PC-9 (cell line): ENCODE measurements at regions of chr17 and their contacts with region 1.

Region 1: GRCh38 chr17:2401426-2402221 is 764 bp upstream of the MNT start:
- DNase-seq: peak; percentile 97 to 100
- H3K4me3 ChIP-seq: peak overlapping the region; percentile 96
- H3K27ac ChIP-seq: peak overlapping the region; percentile 96
- H3K4me1 ChIP-seq: peaks cover 65% of the 10 kb centered on the region
- H3K27me3 ChIP-seq: no peaks in the 10 kb centered on the region
- CTCF ChIP-seq: no peak

Region 2: GRCh38 chr17:2054512-2055291 is 346.9 kb before region 1 on chr17 and contains the start of gene HIC1:
- CTCF ChIA-PET with region 1: interaction called, 3 read pairs
- POLR2A ChIA-PET with region 1: no interaction called
- intact Hi-C with region 1: loop called (anchors 5 kb)
- DNase-seq: peak; percentile 57 to 84
- H3K4me3 ChIP-seq: peak within 1 kb of the TSS; percentile 66
- H3K27ac ChIP-seq: no peak within 1 kb of the TSS
- H3K4me1 ChIP-seq: peaks cover 7% of the 10 kb centered on the region; the same call in 1 of the 2 replicates
- H3K27me3 ChIP-seq: peaks cover 12% of the 10 kb centered on the region
- CTCF ChIP-seq: peak; percentile 81
- total RNA-seq, gene HIC1: 0.63 and 1.6 TPM in 2 replicates

Region 3: GRCh38 chr17:2312736-2313135 is 88.9 kb before region 1 on chr17:
- CTCF ChIA-PET with region 1: no interaction called
- POLR2A ChIA-PET with region 1: no interaction called
- intact Hi-C with region 1: no loop called
- DNase-seq: no peak
- H3K4me3 ChIP-seq: no peak overlapping the region
- H3K27ac ChIP-seq: peak overlapping the region; percentile 18; the same call in 1 of the 2 replicates
- H3K4me1 ChIP-seq: no peaks in the 10 kb centered on the region; the same call in 1 of the 2 replicates
- H3K27me3 ChIP-seq: no peaks in the 10 kb centered on the region
- CTCF ChIP-seq: no peak

Region 4: GRCh38 chr17:2347547-2348307 is 53.9 kb before region 1 on chr17:
- CTCF ChIA-PET with region 1: interaction called, 20 read pairs
- POLR2A ChIA-PET with region 1: interaction called, 9 read pairs
- intact Hi-C with region 1: no loop called
- DNase-seq: peak; percentile 93 to 95
- H3K4me3 ChIP-seq: no peak overlapping the region; the same call in 1 of the 2 replicates
- H3K27ac ChIP-seq: peak overlapping the region; percentile 77
- H3K4me1 ChIP-seq: peaks cover 34% of the 10 kb centered on the region
- H3K27me3 ChIP-seq: no peaks in the 10 kb centered on the region
- CTCF ChIP-seq: no peak

Region 5: DNA sequence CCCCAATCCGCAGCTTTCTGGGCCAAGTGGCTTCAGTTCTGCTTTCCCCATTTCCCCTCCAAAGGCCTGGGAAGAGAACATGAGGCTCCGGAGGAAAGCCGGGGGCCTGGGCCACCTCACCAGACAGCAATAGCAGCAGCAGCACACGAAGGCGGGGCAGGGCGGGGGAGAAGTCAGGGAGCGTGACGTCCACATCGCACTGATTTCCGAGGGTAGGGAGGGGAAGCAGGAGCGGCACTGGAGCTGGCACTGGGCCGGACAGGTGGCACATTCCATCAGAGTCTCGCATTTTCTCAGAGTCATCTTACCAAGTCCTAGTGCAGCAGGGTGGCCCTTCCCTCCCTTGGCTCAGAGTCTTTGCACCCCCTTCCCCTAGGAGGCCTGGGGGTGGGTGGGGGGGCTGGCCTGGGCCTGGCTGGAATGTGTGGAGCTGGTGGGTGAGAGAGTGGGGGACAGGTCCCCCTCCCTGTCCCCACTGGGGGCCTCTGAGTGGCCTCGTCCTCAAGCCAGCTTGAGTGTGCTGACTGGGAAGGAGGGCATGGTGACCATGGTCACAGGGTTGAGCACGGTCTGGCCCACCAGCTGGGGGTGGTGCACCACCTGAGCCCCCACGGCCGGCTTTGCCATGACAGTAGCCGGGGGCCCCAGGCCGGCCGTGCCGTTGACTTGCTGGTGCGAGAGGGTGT is 15.1 kb before region 1 on chr17:
- CTCF ChIA-PET with region 1: interaction called, 13 read pairs
- POLR2A ChIA-PET with region 1: interaction called, 12 read pairs
- intact Hi-C with region 1: loop called (anchors 1 kb)
- DNase-seq: peak in 1 of 2 experiments; percentile 89
- H3K4me3 ChIP-seq: no peak overlapping the region
- H3K27ac ChIP-seq: no peak overlapping the region
- H3K4me1 ChIP-seq: peaks cover 2% of the 10 kb centered on the region
- H3K27me3 ChIP-seq: no peaks in the 10 kb centered on the region
- CTCF ChIP-seq: no peak

Region 6: DNA sequence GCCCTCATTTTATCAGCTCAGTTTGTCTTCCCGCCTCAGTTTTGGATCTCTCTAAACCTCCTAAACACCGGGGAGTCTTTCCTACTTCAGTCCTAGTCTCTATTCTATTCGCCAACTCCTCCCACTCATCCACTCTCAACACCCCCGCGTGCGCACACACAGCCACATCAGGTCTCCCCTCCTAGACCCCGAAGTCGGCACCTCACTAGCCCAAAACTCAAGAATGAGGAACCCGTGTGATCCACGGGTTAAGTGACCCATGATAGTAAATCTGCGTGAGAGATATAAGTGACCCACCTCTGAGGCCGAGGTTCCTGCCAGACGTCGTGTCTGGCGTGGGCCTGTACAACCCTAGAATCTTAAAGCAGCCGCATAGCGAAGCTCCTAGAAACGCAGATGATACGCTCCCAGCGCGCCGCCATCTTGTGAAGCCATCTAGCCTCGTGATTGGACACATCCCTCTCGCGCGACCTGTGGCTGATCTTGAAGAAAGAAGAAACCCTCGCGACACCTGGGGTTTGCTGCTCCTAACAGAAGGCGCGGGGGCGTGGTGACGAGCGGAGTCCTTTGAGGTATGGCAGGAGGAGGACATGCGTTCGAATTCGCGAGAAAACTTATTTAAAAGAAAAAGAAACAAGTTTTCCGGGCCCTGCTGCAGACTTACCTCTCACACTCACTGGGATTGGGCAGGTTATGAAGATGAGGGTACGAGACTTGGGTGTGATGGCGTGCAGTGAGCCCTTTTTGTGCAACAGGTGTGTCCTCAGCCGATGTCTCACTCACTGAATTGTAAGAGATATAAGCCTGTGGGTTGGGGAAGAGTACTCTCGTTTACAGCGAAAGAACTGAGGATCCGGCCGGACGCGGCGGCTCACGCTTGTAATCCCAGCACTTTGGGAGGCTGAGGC is 110.1 kb after region 1 on chr17 and contains the start of gene METTL16:
- CTCF ChIA-PET with region 1: no interaction called
- POLR2A ChIA-PET with region 1: interaction called, 15 read pairs
- intact Hi-C with region 1: no loop called
- DNase-seq: peak; percentile 97
- H3K4me3 ChIP-seq: peak within 1 kb of the TSS; percentile 82
- H3K27ac ChIP-seq: peak within 1 kb of the TSS; percentile 94
- H3K4me1 ChIP-seq: peaks cover 13% of the 10 kb centered on the region
- H3K27me3 ChIP-seq: no peaks in the 10 kb centered on the region
- CTCF ChIP-seq: no peak
- total RNA-seq, gene METTL16: 40.2 and 46.2 TPM in 2 replicates

Region 7: DNA sequence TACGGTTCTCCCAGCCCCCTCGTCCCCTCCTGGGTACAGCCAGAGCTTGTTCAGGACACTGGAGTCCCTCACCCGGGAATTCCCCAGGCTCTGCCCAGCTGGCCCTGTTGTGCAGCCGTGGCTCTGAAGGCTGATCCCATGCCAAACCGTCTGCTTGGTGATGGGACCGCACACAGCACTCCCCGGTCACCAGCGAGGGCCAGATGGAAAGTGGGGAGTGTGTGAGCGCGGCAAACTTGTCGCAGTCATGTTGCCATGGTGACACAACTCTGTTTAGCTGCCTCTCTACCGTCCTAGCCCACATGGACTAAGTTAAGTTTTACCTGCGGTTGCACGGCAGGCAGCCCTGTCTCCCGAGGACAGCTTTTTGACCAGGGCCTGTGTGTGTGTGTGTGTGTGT is 502.5 kb after region 1 on chr17:
- CTCF ChIA-PET with region 1: no interaction called
- POLR2A ChIA-PET with region 1: no interaction called
- intact Hi-C with region 1: no loop called
- DNase-seq: no peak
- H3K4me3 ChIP-seq: no peak overlapping the region
- H3K27ac ChIP-seq: no peak overlapping the region
- H3K4me1 ChIP-seq: no peaks in the 10 kb centered on the region
- H3K27me3 ChIP-seq: no peaks in the 10 kb centered on the region
- CTCF ChIP-seq: no peak

Region 8: DNA sequence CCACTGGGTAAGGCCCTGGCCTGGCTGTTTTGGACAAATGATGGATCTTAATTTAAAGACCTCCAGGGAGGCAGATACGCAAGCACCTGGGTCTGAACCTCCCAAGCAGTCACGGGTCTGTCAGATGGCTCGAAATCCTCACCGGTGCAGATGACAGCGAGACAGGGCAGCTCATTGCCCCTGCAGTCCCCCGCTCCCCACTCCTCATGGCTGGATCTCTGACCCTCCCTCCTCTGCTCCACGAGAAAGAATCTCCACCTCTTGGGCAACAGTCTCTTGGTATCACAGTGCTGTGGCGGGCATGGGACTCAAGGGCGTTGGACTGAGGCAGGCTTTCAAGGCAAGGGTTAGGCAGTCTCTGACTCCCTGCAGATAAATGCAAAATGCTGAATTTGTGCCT is 597.4 kb after region 1 on chr17:
- CTCF ChIA-PET with region 1: no interaction called
- POLR2A ChIA-PET with region 1: interaction called, 18 read pairs
- intact Hi-C with region 1: no loop called
- DNase-seq: no peak
- H3K4me3 ChIP-seq: no peak overlapping the region
- H3K27ac ChIP-seq: no peak overlapping the region
- H3K4me1 ChIP-seq: peaks cover 7% of the 10 kb centered on the region
- H3K27me3 ChIP-seq: no peaks in the 10 kb centered on the region
- CTCF ChIP-seq: no peak